ENCODE measurements at regions of chr19 and their contacts with region 1.

Region 1: DNA sequence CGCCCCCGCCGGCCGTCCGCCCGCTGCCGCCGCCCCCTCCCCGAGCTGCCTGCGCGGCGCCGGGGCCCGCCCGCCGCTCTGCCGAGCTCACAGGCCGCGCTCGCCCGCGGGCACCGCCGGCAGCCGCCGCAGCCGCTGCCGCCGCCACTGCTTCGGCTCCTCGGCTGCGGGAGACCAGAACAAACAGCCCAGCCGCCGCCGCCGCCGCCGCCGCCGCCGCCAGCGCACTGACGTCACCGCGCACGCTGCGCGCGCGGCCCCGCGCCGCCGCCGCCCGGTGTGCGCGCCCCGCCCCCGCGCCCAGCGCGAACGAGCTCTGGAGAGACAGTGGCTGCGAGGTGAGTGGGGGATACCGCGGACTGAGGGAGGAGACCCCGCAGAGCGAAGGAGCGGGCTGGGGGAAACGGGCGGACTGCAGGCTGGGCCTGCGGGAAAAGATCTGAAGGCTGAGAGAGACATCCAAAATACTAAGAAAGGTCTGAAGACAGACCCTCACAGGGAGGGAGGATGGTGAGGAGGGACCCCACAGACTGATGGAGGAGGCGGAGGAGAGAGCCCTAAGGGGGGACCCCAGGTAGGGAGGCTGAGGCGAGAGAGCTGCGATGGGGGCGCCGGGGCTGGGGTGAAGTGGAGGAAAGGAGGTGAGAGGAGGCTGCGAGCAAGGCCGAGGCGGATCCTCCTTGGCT is at the start of gene BRD4:
- DNase-seq: peak; percentile 76
- H3K4me3 Mint-ChIP-seq: peak within 1 kb of the TSS; percentile 97
- H3K27ac Mint-ChIP-seq: peak within 1 kb of the TSS; percentile 96
- H3K4me1 Mint-ChIP-seq: peaks cover 28% of the 10 kb centered on the region
- H3K27me3 Mint-ChIP-seq: no peaks in the 10 kb centered on the region
- total RNA-seq, gene BRD4: 104 and 108 TPM in 2 replicates

Region 2: GRCh38 chr19:15288146-15288963 is 44.1 kb before region 1 on chr19:
- intact Hi-C with region 1: no loop called
- DNase-seq: no peak
- H3K4me3 Mint-ChIP-seq: no peak overlapping the region
- H3K27ac Mint-ChIP-seq: peak overlapping the region; percentile 51
- H3K4me1 Mint-ChIP-seq: peaks cover 85% of the 10 kb centered on the region
- H3K27me3 Mint-ChIP-seq: no peaks in the 10 kb centered on the region

Region 3: DNA sequence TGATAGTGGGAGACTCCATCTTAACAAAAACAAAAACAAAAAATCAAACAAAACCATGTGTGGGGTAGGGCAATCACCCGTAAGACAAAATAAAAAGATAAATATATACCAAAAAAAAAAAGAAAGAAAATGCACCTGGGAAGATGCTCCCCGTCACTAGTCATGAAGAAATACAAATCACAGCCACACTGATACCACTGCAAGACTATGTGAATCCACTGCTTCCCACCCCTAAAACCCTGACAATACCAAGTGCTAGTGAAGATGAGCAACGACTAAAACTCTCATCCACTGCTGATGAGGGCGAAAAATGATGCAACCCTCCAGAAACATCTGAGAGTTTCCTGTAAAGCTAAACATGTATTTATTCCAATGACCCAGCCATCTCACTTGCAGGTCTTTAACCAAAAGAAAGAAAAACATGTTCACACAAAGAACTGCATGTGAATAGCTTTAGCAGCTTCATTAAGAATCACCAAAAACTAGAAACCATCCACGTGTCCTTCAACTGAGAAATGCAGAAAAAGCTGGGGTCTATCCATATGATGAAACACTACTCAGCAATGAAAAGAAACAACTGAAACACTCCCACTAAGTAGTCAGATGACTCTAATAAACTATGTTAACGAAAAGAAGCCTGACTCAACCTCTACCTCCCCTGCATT is 31.8 kb before region 1 on chr19:
- intact Hi-C with region 1: loop called (anchors 1 kb)
- DNase-seq: no peak
- H3K4me3 Mint-ChIP-seq: peak overlapping the region; percentile 31
- H3K27ac Mint-ChIP-seq: peak overlapping the region; percentile 90
- H3K4me1 Mint-ChIP-seq: peaks cover 69% of the 10 kb centered on the region
- H3K27me3 Mint-ChIP-seq: no peaks in the 10 kb centered on the region

Region 4: DNA sequence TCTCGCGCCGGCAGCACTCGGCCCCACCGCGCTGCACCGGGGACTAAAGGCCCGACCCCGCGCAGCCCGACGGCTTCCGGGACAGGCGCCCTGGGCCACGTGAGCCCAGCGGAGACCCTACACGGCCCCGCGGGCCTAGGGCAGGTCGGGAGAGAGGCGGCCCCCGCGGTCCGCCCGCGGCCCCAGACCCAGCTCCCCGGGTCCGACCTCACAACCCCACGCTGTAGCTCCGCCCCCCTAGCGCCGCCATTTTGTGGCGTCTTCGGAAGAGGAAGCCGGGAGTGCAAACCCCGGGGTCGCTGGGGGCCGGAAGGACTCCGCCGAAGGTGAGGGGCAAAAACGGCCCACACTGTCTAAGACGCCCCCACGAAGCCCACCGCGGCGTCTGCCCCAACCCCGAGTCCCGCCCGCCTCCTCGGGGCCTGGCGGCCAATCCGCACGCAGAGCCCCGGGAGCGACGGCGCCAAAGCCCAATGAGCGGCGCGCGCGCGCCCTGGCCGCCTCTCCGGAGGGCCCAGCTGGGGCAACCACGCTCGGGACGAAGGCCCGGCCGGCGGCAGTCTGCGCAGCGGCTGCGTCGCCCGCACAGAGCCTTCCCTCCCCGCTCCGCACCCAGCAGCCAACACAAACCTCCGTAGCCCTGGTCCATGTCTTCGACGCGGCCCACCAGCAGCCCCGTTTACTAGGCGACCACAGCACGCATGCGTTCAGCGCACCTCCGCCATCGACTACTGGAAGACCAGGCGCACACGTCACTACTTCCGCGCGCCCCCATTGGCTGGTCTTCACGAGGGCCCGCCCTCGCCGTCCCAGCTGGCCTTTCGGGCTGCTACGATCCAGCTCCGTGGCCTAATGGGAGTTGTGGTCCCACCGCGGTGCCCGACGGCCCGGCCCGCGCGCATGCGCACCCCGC is 46.9 kb after region 1 on chr19 and contains the start of gene AKAP8:
- intact Hi-C with region 1: loop called (anchors 2 kb)
- DNase-seq: peak; percentile 98
- H3K4me3 Mint-ChIP-seq: peak within 1 kb of the TSS; percentile 98
- H3K27ac Mint-ChIP-seq: peak within 1 kb of the TSS; percentile 100
- H3K4me1 Mint-ChIP-seq: peaks cover 30% of the 10 kb centered on the region
- H3K27me3 Mint-ChIP-seq: no peaks in the 10 kb centered on the region
- total RNA-seq, gene AKAP8: 56.0 and 62.1 TPM in 2 replicates

Region 5: GRCh38 chr19:15643387-15643786 is 310.9 kb after region 1 on chr19:
- intact Hi-C with region 1: no loop called
- DNase-seq: no peak
- H3K4me3 Mint-ChIP-seq: no peak overlapping the region
- H3K27ac Mint-ChIP-seq: no peak overlapping the region
- H3K4me1 Mint-ChIP-seq: no peaks in the 10 kb centered on the region
- H3K27me3 Mint-ChIP-seq: no peaks in the 10 kb centered on the region